Caco-2 (cell line): ENCODE measurements at regions of chr11 and their contacts with region 1.

Region 1: DNA sequence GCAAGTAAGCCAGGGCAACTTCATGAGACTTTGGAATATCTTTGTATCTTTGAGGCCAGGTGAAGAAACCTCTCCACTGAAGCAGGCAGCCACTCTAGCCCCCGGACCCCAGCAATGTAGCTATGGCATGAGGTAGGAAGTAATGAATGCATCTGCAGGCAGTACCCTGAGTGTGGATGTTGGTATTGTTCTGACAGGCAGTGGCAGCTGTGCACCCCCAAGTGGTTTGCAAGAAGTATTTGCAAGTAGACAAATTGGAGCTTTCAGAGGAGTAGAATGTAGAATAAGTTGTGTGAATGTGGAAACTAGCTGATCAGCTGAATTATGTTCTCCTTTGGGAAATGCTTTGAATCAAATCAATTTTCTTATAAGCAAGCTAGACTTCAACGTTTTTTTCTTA is 194.4 kb upstream of the PGR start:
- DNase-seq: peak in 1 of 2 experiments; percentile 46
- H3K4me3 ChIP-seq: no peak overlapping the region
- H3K4me3 Mint-ChIP-seq: no peak overlapping the region
- H3K27ac Mint-ChIP-seq: no peak overlapping the region
- H3K4me1 ChIP-seq: no peaks in the 10 kb centered on the region
- H3K4me1 Mint-ChIP-seq: no peaks in the 10 kb centered on the region
- H3K27me3 ChIP-seq: no peaks in the 10 kb centered on the region; the same call in 1 of the 2 replicates
- H3K27me3 Mint-ChIP-seq: peaks cover 8% of the 10 kb centered on the region
- CTCF ChIP-seq: peak; percentile 25 to 39

Region 2: DNA sequence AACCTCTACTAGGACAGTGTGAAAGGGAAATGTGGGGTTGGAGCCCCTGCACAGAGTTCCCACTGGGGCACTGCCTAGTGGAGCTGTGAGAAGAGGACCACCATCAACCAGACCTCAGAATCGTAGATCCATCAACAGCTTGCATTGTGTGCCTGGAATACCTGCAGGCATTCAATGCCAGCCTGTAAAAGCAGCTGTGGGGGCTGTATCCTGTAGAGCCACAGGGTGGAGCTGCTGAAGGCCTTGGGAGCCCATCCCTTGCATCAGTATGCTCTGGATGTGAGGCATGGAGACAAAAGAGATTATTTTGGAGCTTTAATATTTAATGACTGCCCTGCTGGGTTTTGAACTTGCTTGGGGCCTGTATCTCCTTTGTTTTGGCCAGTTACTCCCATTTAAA is 240.7 kb before region 1 on chr11:
- CTCF ChIA-PET with region 1: interaction called, 3 read pairs
- POLR2A ChIA-PET with region 1: no interaction called
- intact Hi-C with region 1: loop called (anchors 1 kb)
- DNase-seq: no peak
- H3K4me3 ChIP-seq: no peak overlapping the region
- H3K4me3 Mint-ChIP-seq: no peak overlapping the region
- H3K27ac Mint-ChIP-seq: no peak overlapping the region
- H3K4me1 ChIP-seq: no peaks in the 10 kb centered on the region
- H3K4me1 Mint-ChIP-seq: no peaks in the 10 kb centered on the region
- H3K27me3 ChIP-seq: no peaks in the 10 kb centered on the region
- H3K27me3 Mint-ChIP-seq: no peaks in the 10 kb centered on the region
- CTCF ChIP-seq: no peak

Region 3: DNA sequence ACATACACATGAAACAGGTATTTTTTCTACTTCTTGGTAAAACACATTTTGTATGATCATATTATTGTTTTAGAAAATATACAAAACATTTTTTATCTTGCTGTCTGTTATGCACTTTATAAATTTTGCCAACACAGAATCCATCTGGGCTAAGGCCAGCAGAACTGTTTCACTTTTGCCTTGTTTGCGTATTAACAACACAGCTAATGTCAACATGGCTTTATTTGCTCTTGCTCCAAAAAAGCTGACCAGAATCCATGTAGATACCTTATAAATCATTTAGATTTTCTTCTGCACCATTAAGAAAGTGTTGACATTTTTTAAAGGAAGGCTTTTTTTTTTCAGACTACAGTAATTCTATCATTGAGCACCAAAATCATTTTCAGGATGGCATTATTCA is 136.2 kb before region 1 on chr11:
- CTCF ChIA-PET with region 1: no interaction called
- POLR2A ChIA-PET with region 1: no interaction called
- intact Hi-C with region 1: loop called (anchors 10 kb)
- DNase-seq: no peak
- H3K4me3 ChIP-seq: no peak overlapping the region
- H3K4me3 Mint-ChIP-seq: no peak overlapping the region
- H3K27ac Mint-ChIP-seq: no peak overlapping the region
- H3K4me1 ChIP-seq: no peaks in the 10 kb centered on the region; the same call in 1 of the 2 replicates
- H3K4me1 Mint-ChIP-seq: no peaks in the 10 kb centered on the region
- H3K27me3 ChIP-seq: no peaks in the 10 kb centered on the region
- H3K27me3 Mint-ChIP-seq: peaks cover 4% of the 10 kb centered on the region
- CTCF ChIP-seq: no peak

Region 4: DNA sequence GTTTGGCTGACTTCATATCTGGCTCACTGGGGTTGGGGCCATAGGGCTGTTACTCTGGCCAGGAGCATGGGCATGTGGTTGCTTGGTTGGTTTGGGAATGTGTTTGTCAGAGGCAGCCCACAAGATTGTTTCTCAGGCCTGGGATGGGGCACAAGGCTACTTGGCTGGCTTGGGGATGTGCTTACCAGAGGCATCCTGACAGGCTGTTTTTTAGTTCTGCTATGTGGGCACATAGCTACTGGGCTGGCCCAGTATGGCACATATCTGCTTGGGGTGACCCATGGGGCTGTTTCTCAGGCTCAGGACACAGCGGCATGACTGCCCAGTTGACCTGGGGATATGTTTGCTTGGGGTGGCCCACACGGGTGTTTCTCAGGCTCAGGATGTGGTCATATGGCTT is 99.8 kb before region 1 on chr11:
- CTCF ChIA-PET with region 1: no interaction called
- POLR2A ChIA-PET with region 1: no interaction called
- intact Hi-C with region 1: no loop called
- DNase-seq: no peak
- H3K4me3 ChIP-seq: no peak overlapping the region
- H3K4me3 Mint-ChIP-seq: no peak overlapping the region
- H3K27ac Mint-ChIP-seq: no peak overlapping the region
- H3K4me1 ChIP-seq: no peaks in the 10 kb centered on the region
- H3K4me1 Mint-ChIP-seq: no peaks in the 10 kb centered on the region
- H3K27me3 ChIP-seq: no peaks in the 10 kb centered on the region
- H3K27me3 Mint-ChIP-seq: no peaks in the 10 kb centered on the region
- CTCF ChIP-seq: no peak

Region 5: GRCh38 chr11:101363706-101364275 is 39.8 kb after region 1 on chr11:
- CTCF ChIA-PET with region 1: no interaction called
- POLR2A ChIA-PET with region 1: no interaction called
- intact Hi-C with region 1: no loop called
- DNase-seq: no peak
- H3K4me3 ChIP-seq: no peak overlapping the region
- H3K4me3 Mint-ChIP-seq: no peak overlapping the region
- H3K27ac Mint-ChIP-seq: no peak overlapping the region
- H3K4me1 ChIP-seq: no peaks in the 10 kb centered on the region
- H3K4me1 Mint-ChIP-seq: no peaks in the 10 kb centered on the region
- H3K27me3 ChIP-seq: no peaks in the 10 kb centered on the region
- H3K27me3 Mint-ChIP-seq: peaks cover 16% of the 10 kb centered on the region
- CTCF ChIP-seq: no peak